GM18951 (cell line): ENCODE measurements at regions of chr10 and their contacts with region 1.

Region 1: DNA sequence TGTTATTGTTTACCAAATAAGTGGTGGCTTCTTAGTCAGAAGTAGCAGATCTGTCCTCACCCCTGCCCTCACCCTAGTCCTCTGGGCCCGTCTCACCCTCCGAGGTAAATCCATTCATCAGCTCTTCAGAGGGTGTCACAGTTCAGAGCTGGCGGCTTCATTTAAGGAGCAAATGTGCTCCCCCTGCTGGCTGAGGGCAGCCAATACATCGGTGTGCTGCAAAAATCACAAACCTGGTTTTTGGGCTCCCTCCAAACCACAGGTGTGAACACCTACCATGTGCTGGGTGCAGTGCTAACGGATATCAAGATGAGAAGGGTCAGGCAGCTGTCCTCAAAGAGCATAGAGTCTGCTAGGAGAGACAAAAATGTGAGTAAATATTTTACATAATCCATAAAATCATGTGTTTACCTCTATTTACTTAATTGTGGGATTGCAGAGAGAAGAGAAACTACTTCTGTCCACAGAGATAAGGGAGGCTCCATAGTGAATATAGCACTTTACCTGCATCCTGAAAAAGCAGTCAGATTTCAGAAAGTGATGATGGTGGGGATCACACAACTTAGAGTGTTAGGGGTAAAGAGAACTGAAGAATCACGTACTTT is 15.5 kb upstream of the CRTAC1 start:
- POLR2A ChIP-seq: no peak

Region 2: GRCh38 chr10:97490592-97490991 is 555.3 kb before region 1 on chr10:
- in situ Hi-C with region 1: no loop called
- POLR2A ChIP-seq: no peak

Region 3: DNA sequence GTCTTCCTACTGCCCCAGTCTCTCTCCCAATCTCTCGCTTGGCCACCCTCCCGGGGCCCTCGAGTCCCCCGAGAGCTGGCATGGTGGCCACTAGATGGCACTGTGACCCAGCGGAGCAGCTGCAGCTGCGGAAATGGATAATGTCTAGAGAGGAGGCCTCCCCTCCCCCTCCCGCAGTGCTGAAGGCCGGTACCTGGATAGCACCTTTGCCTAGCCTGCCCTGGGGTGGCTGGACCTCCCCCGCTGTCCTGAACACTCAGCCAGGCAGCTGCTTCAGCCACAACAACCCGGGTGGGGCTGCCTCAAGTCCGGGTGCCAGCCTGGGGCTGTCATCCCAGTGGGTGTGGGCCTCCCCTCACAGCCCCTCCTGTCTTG is 131.1 kb before region 1 on chr10:
- in situ Hi-C with region 1: loop called (anchors 10 kb)
- POLR2A ChIP-seq: no peak

Region 4: GRCh38 chr10:97949462-97949861 is 96.4 kb before region 1 on chr10:
- in situ Hi-C with region 1: no loop called
- POLR2A ChIP-seq: no peak